Natural killer cell (primary cell): ENCODE measurements at regions of chr5 and their contacts with region 1.

Region 1: DNA sequence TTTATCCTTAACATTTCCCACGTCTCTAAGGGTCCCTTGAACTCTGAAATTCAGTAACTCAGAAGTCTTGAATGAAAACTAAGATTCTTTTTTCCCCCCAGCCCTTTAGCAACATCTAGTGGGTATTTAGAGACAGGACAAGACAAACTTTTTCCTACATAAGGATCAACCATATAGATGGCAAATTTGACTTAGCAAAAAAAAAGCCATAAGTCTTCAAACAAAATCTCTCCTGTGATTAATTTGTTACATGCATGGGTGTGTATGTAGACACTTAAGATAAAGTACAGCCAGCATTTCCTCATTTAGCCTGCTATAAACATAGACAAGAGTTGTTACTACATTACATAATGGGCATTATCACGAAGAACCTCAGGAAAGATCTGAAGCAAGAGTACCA is 29.1 kb upstream of the ANKRD31 start:
- DNase-seq: peak in 1 of 2 donors; percentile 69
- ATAC-seq: peak in 1 of 3 donors; percentile 27
- H3K4me3 ChIP-seq: no peak overlapping the region
- H3K4me3 Mint-ChIP-seq: no peak overlapping the region
- H3K27ac ChIP-seq: no peak overlapping the region
- H3K27ac Mint-ChIP-seq: no peak overlapping the region
- H3K4me1 ChIP-seq: no peaks in the 10 kb centered on the region
- H3K4me1 Mint-ChIP-seq: no peaks in the 10 kb centered on the region
- H3K27me3 ChIP-seq: no peaks in the 10 kb centered on the region
- H3K27me3 Mint-ChIP-seq: peaks cover 0 to 13% of the 10 kb centered on the region in 2 donors
- CTCF ChIP-seq: peak; percentile 47

Region 2: DNA sequence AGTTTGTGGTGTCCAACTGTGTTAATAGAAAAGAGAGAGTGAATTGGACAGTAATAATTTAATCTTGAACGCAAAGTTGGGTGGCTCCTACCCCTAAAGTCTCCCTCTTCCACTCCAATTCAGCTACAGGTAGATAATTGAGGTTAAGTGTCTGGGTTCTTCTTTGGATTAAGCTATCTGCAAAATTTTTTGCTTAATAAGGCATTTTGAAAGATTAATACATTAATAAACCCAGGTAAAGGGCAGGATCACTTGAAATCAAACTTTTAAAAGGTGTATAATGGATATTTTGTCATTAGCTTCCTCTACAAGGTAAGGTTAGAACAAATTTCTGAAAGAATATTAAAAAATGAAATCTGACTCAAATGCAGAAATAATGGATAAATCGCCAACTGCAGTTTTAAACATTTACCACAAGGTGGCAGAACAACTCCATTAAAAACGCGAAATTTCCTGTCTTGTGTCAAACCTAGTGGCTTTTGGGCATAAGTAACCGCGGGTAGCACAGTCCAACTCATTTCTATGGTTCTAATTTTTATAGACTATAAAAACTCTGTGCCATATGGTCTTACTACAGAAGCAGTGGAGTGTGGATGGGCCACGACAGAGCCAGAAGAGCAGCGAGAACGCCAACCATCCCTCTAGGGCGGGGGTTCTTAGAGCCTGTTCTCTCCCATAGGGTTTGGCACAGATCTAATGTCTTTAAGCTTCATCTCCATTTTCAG is 1363.2 kb before region 1 on chr5:
- intact Hi-C with region 1: loop called (anchors 10 kb)
- DNase-seq: peak in 1 of 2 donors; percentile 74
- ATAC-seq: peak in 2 of 3 donors; percentile 53 to 57
- H3K4me3 ChIP-seq: no peak overlapping the region
- H3K4me3 Mint-ChIP-seq: no peak overlapping the region
- H3K27ac ChIP-seq: no peak overlapping the region
- H3K27ac Mint-ChIP-seq: no peak overlapping the region
- H3K4me1 ChIP-seq: no peaks in the 10 kb centered on the region
- H3K4me1 Mint-ChIP-seq: no peaks in the 10 kb centered on the region
- H3K27me3 ChIP-seq: no peaks in the 10 kb centered on the region
- H3K27me3 Mint-ChIP-seq: peaks cover 0 to 3% of the 10 kb centered on the region in 2 donors
- CTCF ChIP-seq: peak; percentile 90

Region 3: GRCh38 chr5:74673011-74673790 is 592.5 kb before region 1 on chr5:
- intact Hi-C with region 1: loop called (anchors 5 kb)
- DNase-seq: peak in 1 of 2 donors; percentile 47
- ATAC-seq: no peak
- H3K4me3 ChIP-seq: no peak overlapping the region
- H3K4me3 Mint-ChIP-seq: no peak overlapping the region
- H3K27ac ChIP-seq: no peak overlapping the region
- H3K27ac Mint-ChIP-seq: no peak overlapping the region
- H3K4me1 ChIP-seq: no peaks in the 10 kb centered on the region
- H3K4me1 Mint-ChIP-seq: no peaks in the 10 kb centered on the region
- H3K27me3 ChIP-seq: no peaks in the 10 kb centered on the region
- H3K27me3 Mint-ChIP-seq: peaks cover 13 to 20% of the 10 kb centered on the region in 2 donors
- CTCF ChIP-seq: peak; percentile 26

Region 4: GRCh38 chr5:75049456-75050351 is 216.0 kb before region 1 on chr5:
- intact Hi-C with region 1: loop called (anchors 10 kb)
- DNase-seq: peak; percentile 35 to 90
- ATAC-seq: peak; percentile 59 to 71 (median 60)
- H3K4me3 ChIP-seq: no peak overlapping the region
- H3K4me3 Mint-ChIP-seq: peak overlapping the region; percentile 22
- H3K27ac ChIP-seq: no peak overlapping the region
- H3K27ac Mint-ChIP-seq: peak overlapping the region in 1 of 2 donors; percentile 38
- H3K4me1 ChIP-seq: peaks cover 39% of the 10 kb centered on the region
- H3K4me1 Mint-ChIP-seq: peaks cover 39 to 54% of the 10 kb centered on the region in 2 donors
- H3K27me3 ChIP-seq: peaks cover 9% of the 10 kb centered on the region
- H3K27me3 Mint-ChIP-seq: peaks cover 25 to 35% of the 10 kb centered on the region in 2 donors
- CTCF ChIP-seq: peak; percentile 73